Heart right ventricle (tissue), 16 donors: ENCODE measurements at regions of chr1 and their contacts with region 1.

Region 1: DNA sequence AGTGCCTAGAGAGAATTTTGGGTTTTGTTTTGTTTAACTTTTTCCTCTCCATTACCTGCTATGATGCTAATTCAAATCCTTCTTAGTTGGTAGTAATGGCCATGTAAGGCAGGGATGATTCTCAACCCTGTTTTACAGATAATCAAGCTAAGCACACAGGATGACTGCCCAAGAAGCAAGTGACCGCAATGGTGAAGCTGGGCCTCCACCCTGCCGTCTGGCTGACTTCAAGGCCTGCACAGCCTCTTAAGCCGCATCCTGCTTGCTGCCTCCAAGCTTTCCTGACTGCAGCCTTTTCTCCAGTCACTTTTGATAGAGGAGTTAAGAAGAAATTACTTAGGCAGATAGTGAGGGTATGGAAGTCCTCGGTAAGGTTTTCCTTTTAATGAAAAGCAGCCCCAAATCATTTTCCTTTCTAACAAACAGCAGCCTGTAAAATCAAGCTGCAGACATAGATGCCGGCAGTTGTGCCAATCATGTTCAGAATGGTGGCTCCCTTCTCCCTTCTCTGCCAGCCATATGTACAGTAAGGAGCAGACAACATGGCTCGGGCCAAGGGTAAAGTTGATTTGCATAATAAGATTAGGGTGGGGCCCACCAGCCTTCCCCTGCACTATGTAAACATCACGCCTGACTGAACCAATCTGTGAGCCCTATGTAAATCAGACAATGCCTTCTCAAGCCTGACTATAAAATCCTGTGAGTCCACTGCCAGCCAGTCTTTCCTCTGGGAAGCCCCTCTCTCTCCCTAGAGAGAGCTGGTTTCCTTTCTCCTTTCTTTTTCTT is 8.8 kb upstream of the CTBS start:
- DNase-seq: no peak
- ATAC-seq: peak in 6 of 8 donors; percentile 28 to 81 (median 56)
- H3K4me3 ChIP-seq: peak overlapping the region in 1 of 10 donors; percentile 23
- H3K27ac ChIP-seq: peak overlapping the region in 7 of 10 donors; percentile 15 to 80 (median 42)
- H3K4me1 ChIP-seq: peaks cover 0 to 22% (median 14%) of the 10 kb centered on the region in 9 donors
- H3K27me3 ChIP-seq: no peaks in the 10 kb centered on the region
- CTCF ChIP-seq: no peak

Region 2: DNA sequence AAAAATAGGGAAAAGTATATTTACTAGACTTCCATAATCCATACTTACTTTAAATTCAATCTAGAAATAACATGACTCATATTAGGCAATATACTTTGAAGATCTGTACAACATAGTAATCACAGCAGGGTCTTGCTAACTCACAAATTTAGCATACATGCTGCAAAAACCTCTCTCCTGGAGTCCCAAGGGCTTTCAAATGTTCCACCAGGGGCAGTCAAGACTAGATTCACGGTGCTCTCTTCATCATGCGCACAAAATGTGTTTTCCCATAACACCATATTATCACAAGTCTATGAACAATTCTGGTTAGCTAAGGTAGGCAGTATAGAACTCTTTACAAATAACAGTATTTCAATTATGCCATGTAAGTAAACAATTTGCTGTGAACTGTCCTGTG is 61.5 kb after region 1 on chr1:
- intact Hi-C with region 1: loop called in 1 of 10 experiments (anchors 10 kb)
- DNase-seq: no peak
- ATAC-seq: no peak
- H3K4me3 ChIP-seq: no peak overlapping the region
- H3K27ac ChIP-seq: no peak overlapping the region
- H3K4me1 ChIP-seq: peaks cover 0 to 8% (median 0%) of the 10 kb centered on the region in 9 donors
- H3K27me3 ChIP-seq: no peaks in the 10 kb centered on the region
- CTCF ChIP-seq: no peak